Posterior vena cava (tissue), 2 donors: ENCODE measurements at regions of chr3 and their contacts with region 1.

Region 1: GRCh38 chr3:171566803-171567422 is 106.7 kb upstream of the TNIK start:
- DNase-seq: no peak

Region 2: GRCh38 chr3:170961616-170962400 is 605.1 kb before region 1 on chr3:
- intact Hi-C with region 1: loop called (anchors 2 to 5 kb)
- DNase-seq: no peak

Region 3: GRCh38 chr3:171049861-171050444 is 517.0 kb before region 1 on chr3:
- intact Hi-C with region 1: loop called in 1 of 2 experiments (anchors 10 kb)
- DNase-seq: no peak

Region 4: DNA sequence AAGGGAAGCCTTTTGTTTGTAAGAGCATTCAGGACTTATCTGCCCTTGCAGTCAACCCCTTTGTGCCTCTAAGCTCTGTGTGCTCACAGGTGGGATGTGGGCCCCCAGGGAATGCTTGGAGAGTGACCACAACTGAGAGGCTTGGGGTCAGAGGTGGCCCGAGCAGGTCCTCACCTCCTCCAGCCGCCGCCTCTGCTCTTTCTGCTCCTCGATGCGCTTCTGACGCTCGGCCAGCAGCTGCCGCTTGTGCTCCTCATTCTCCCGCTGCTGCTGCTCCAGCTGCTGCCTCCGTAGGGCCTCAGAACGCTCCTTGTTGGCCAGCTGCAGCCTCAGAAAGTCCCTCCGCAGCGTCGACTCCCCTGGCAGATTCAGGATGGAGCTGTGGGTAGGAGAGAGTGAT is 409.6 kb before region 1 on chr3:
- intact Hi-C with region 1: loop called (anchors 10 kb)
- DNase-seq: no peak

Region 5: GRCh38 chr3:171162986-171163723 is 403.8 kb before region 1 on chr3:
- intact Hi-C with region 1: loop called (anchors 10 kb)
- DNase-seq: no peak